CD4-positive, alpha-beta T cell (primary cell): ENCODE measurements at regions of chr6 and their contacts with region 1.

Region 1: DNA sequence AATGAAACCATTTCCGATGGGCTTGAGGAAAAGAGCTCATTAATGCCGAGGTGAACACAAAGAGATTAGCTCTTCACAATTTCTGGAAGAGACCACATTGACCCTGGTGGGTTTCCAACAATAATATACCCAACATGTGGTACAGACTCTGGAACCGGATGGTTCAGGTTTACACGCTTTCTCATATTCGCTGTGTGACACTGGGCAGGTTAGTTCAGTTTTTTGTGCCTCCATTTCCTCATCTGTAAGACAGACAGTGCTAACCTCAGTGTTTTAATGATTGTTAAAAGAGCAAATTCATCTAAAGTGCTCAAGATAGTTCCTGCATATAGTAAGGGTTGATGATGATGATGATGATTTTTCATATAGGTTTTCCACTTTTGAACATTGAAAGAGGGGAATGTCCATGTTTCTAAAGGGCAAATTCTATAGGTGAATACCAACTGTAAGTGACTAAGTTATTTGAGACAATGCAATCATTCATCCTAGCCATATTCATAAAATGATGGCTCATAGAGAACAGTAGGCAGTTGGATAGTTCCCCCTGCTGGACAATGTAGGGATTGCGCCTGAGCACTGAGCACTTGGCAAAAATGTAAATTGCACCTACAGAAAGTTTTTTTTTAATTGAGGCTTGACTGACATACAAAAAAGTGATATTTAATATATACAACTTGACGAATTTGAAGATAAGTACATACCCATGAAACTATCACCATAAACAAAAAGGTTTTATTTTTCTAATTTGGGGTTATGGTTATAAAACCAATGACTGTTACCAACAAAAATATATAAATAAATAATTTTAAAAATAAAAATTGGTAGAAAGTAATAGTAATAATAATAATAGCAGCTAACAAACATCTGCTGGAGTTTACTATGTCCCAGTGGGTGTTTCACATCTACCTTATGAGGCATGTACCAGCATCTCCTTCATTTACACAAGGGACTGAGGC is 2.1 kb upstream of the PERP start:
- DNase-seq: peak; percentile 63 to 88 (median 78)
- ATAC-seq: peak; percentile 61
- H3K4me3 ChIP-seq: no peak overlapping the region
- H3K4me3 Mint-ChIP-seq: peak overlapping the region; percentile 47
- H3K27ac ChIP-seq: no peak overlapping the region
- H3K27ac Mint-ChIP-seq: no peak overlapping the region
- H3K4me1 ChIP-seq: peaks cover 20% of the 10 kb centered on the region
- H3K4me1 Mint-ChIP-seq: peaks cover 24% of the 10 kb centered on the region
- H3K27me3 ChIP-seq: peaks cover 9 to 26% of the 10 kb centered on the region in 2 experiments
- H3K27me3 Mint-ChIP-seq: peaks cover 52% of the 10 kb centered on the region
- CTCF ChIP-seq: peak; percentile 92

Region 2: GRCh38 chr6:137094411-137095008 is 1014.8 kb before region 1 on chr6:
- CTCF ChIA-PET with region 1: no interaction called
- POLR2A ChIA-PET with region 1: no interaction called
- intact Hi-C with region 1: loop called in 1 of 2 experiments (anchors 10 kb)
- DNase-seq: peak; percentile 22 to 80 (median 37)
- ATAC-seq: no peak
- H3K4me3 ChIP-seq: no peak overlapping the region
- H3K4me3 Mint-ChIP-seq: no peak overlapping the region
- H3K27ac ChIP-seq: no peak overlapping the region
- H3K27ac Mint-ChIP-seq: no peak overlapping the region
- H3K4me1 ChIP-seq: peaks cover 9% of the 10 kb centered on the region
- H3K4me1 Mint-ChIP-seq: peaks cover 12% of the 10 kb centered on the region
- H3K27me3 ChIP-seq: no peaks in the 10 kb centered on the region
- H3K27me3 Mint-ChIP-seq: peaks cover 5% of the 10 kb centered on the region
- CTCF ChIP-seq: peak; percentile 71

Region 3: GRCh38 chr6:137341681-137342195 is 767.6 kb before region 1 on chr6:
- CTCF ChIA-PET with region 1: no interaction called
- POLR2A ChIA-PET with region 1: no interaction called
- intact Hi-C with region 1: loop called in 1 of 2 experiments (anchors 10 kb)
- DNase-seq: peak; percentile 29 to 80 (median 50)
- ATAC-seq: peak; percentile 39
- H3K4me3 ChIP-seq: no peak overlapping the region
- H3K4me3 Mint-ChIP-seq: peak overlapping the region; percentile 81
- H3K27ac ChIP-seq: no peak overlapping the region
- H3K27ac Mint-ChIP-seq: no peak overlapping the region
- H3K4me1 ChIP-seq: peaks cover 12% of the 10 kb centered on the region
- H3K4me1 Mint-ChIP-seq: peaks cover 18% of the 10 kb centered on the region
- H3K27me3 ChIP-seq: peaks cover 0 to 6% of the 10 kb centered on the region in 2 experiments
- H3K27me3 Mint-ChIP-seq: peaks cover 9% of the 10 kb centered on the region
- CTCF ChIP-seq: peak; percentile 72

Region 4: GRCh38 chr6:137878486-137879285 is 230.6 kb before region 1 on chr6:
- CTCF ChIA-PET with region 1: no interaction called
- POLR2A ChIA-PET with region 1: no interaction called
- intact Hi-C with region 1: loop called (anchors 5 kb)
- DNase-seq: peak in 4 of 14 experiments; percentile 22 to 62 (median 46)
- ATAC-seq: no peak
- H3K4me3 ChIP-seq: no peak overlapping the region
- H3K4me3 Mint-ChIP-seq: peak overlapping the region; percentile 76
- H3K27ac ChIP-seq: peak overlapping the region in 1 of 2 donors; percentile 37
- H3K27ac Mint-ChIP-seq: peak overlapping the region; percentile 95
- H3K4me1 ChIP-seq: peaks cover 68% of the 10 kb centered on the region
- H3K4me1 Mint-ChIP-seq: peaks cover 88% of the 10 kb centered on the region
- H3K27me3 ChIP-seq: no peaks in the 10 kb centered on the region
- H3K27me3 Mint-ChIP-seq: peaks cover 8% of the 10 kb centered on the region
- CTCF ChIP-seq: no peak

Region 5: DNA sequence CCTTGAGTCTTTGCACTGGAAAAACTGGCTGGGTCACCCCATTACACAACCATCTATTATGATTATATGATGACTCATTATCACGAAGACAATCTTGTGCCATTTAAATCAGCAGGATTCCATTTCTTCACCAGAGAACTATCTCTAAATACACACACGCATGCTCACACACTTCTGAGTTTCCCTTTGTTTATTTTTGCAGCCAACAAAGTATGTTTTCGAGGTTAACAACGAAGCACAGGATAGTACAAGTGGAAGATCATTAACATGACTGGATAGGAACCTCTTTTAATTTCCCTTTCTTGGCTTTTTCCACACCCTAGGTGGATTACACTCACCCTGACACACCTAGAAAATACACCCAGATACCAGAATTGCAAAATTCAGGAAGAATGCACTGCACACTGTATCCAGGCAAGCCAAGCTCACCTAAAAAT is 21.0 kb before region 1 on chr6:
- CTCF ChIA-PET with region 1: no interaction called
- POLR2A ChIA-PET with region 1: no interaction called
- intact Hi-C with region 1: no loop called
- DNase-seq: no peak
- ATAC-seq: no peak
- H3K4me3 ChIP-seq: no peak overlapping the region
- H3K4me3 Mint-ChIP-seq: no peak overlapping the region
- H3K27ac ChIP-seq: no peak overlapping the region
- H3K27ac Mint-ChIP-seq: no peak overlapping the region
- H3K4me1 ChIP-seq: no peaks in the 10 kb centered on the region
- H3K4me1 Mint-ChIP-seq: no peaks in the 10 kb centered on the region
- H3K27me3 ChIP-seq: no peaks in the 10 kb centered on the region
- H3K27me3 Mint-ChIP-seq: peaks cover 23% of the 10 kb centered on the region
- CTCF ChIP-seq: no peak

Region 6: DNA sequence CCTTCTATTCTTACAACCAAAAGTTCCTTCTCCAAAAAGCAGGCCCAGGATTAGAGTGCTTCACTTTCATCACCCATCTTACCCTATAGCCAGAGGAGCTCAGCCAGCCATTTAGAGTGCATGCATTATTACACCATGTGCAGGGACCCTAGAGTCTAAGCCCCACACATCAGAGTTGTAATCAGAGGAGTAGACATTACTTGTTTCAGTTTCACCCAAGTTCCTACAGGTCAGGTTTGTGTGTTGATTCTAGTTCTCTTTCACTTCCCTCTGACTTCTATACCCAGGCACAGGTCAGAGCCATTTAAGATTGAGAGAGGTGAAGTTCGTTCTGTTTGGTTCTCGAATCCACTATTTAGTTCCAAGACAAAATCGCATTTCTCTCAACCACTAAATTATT is 36.1 kb after region 1 on chr6:
- CTCF ChIA-PET with region 1: no interaction called
- POLR2A ChIA-PET with region 1: no interaction called
- intact Hi-C with region 1: no loop called
- DNase-seq: no peak
- ATAC-seq: no peak
- H3K4me3 ChIP-seq: no peak overlapping the region
- H3K4me3 Mint-ChIP-seq: no peak overlapping the region
- H3K27ac ChIP-seq: no peak overlapping the region
- H3K27ac Mint-ChIP-seq: no peak overlapping the region
- H3K4me1 ChIP-seq: no peaks in the 10 kb centered on the region
- H3K4me1 Mint-ChIP-seq: no peaks in the 10 kb centered on the region
- H3K27me3 ChIP-seq: peaks cover 3 to 18% of the 10 kb centered on the region in 2 experiments
- H3K27me3 Mint-ChIP-seq: peaks cover 49% of the 10 kb centered on the region
- CTCF ChIP-seq: no peak

Region 7: GRCh38 chr6:138211027-138211581 is 101.8 kb after region 1 on chr6:
- CTCF ChIA-PET with region 1: no interaction called
- POLR2A ChIA-PET with region 1: no interaction called
- intact Hi-C with region 1: no loop called
- DNase-seq: no peak
- ATAC-seq: no peak
- H3K4me3 ChIP-seq: no peak overlapping the region
- H3K4me3 Mint-ChIP-seq: no peak overlapping the region
- H3K27ac ChIP-seq: no peak overlapping the region
- H3K27ac Mint-ChIP-seq: no peak overlapping the region
- H3K4me1 ChIP-seq: no peaks in the 10 kb centered on the region
- H3K4me1 Mint-ChIP-seq: no peaks in the 10 kb centered on the region
- H3K27me3 ChIP-seq: peaks cover 2 to 12% of the 10 kb centered on the region in 2 experiments
- H3K27me3 Mint-ChIP-seq: peaks cover 24% of the 10 kb centered on the region
- CTCF ChIP-seq: no peak